Activated CD4-positive, alpha-beta T cell treated with anti-CD3 and anti-CD28 coated beads, Interleukin-2, amount 10 ng/mL, durations not matched to agents 7 days and 5 days (primary cell): ENCODE measurements at regions of chr15 and their contacts with region 1.

Region 1: DNA sequence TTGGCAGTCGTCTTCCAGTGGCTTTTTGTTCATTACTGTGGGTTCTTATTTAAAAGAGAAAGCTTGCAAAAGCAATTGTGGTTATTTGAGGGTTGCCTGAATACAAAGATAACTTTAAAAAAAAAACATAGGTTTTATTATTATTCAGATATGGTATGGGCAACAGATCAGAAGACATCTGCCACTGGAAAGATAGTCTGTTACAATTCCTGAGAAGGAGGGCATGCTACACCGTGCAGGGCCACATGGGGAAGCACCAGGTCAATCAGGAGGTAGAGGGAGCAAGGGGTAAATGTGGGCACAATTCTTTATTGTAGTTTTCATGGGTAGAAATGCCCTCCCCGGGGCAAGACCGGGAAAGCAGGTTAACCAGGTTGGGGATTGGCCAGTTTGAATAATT is 46.5 kb downstream of the BBS4 start:
- DNase-seq: no peak
- H3K4me3 Mint-ChIP-seq: no peak overlapping the region
- H3K27ac Mint-ChIP-seq: no peak overlapping the region
- H3K4me1 Mint-ChIP-seq: peaks cover 12% of the 10 kb centered on the region
- H3K27me3 Mint-ChIP-seq: no peaks in the 10 kb centered on the region

Region 2: DNA sequence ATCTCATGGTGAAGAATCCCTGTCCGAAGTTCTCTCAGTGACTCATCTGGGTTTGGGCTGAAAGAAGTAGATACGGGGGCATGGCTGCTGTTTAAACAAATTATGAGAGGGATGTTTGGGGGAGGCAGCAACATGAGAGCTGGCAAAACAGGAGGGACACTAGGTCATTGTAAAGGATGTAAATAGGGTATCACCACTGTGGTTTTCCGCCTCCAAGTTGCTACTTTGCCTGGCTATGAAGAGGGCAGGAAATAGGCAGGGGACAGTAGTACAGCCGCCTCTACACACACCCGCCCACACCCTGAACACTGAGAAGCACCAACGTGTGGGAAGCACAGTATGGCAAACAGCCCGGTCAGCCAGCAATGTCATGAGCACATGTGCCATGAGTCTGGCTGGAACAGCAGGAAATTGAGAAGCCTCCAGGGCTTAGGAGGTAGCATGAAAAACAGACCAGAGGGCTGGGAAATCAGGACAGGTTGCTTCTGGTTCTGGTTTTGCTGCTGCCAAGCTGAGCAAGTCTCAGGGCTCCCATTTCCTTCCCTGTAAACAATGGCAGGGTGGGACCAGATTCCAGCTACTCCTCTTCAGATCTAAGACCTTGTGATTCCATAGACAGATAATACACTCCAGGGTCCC is 373.7 kb before region 1 on chr15:
- CTCF ChIA-PET with region 1: no interaction called
- POLR2A ChIA-PET with region 1: no interaction called
- DNase-seq: no peak
- H3K4me3 Mint-ChIP-seq: no peak overlapping the region
- H3K27ac Mint-ChIP-seq: no peak overlapping the region
- H3K4me1 Mint-ChIP-seq: peaks cover 16% of the 10 kb centered on the region
- H3K27me3 Mint-ChIP-seq: no peaks in the 10 kb centered on the region

Region 3: GRCh38 chr15:72722071-72722696 is 10.3 kb before region 1 on chr15:
- CTCF ChIA-PET with region 1: interaction called, 12 read pairs
- POLR2A ChIA-PET with region 1: no interaction called
- DNase-seq: peak; percentile 82
- H3K4me3 Mint-ChIP-seq: no peak overlapping the region
- H3K27ac Mint-ChIP-seq: no peak overlapping the region
- H3K4me1 Mint-ChIP-seq: peaks cover 3% of the 10 kb centered on the region
- H3K27me3 Mint-ChIP-seq: no peaks in the 10 kb centered on the region